ENCODE measurements at regions of chr14 and their contacts with region 1.

Region 1: GRCh38 chr14:64792231-64792630 is 87.5 kb downstream of the SPTB start:
- DNase-seq: peak; percentile 64

Region 2: GRCh38 chr14:64758691-64759584 is 33.3 kb before region 1 on chr14:
- in situ Hi-C with region 1: loop called (anchors 5 kb)
- DNase-seq: no peak